ENCODE measurements at regions of chr10 and their contacts with region 1.

Region 1: GRCh38 chr10:62816331-62817120 is at the start of gene EGR2:
- DNase-seq: peak; percentile 98
- total RNA-seq, gene EGR2: 3.0 to 4.0 TPM

Region 2: GRCh38 chr10:62443866-62444265 is 372.7 kb before region 1 on chr10:
- intact Hi-C with region 1: loop called in 1 of 2 experiments (anchors 10 kb)
- DNase-seq: no peak

Region 3: GRCh38 chr10:62594093-62594520 is 222.4 kb before region 1 on chr10:
- intact Hi-C with region 1: loop called in 1 of 2 experiments (anchors 10 kb)
- DNase-seq: peak; percentile 86

Region 4: DNA sequence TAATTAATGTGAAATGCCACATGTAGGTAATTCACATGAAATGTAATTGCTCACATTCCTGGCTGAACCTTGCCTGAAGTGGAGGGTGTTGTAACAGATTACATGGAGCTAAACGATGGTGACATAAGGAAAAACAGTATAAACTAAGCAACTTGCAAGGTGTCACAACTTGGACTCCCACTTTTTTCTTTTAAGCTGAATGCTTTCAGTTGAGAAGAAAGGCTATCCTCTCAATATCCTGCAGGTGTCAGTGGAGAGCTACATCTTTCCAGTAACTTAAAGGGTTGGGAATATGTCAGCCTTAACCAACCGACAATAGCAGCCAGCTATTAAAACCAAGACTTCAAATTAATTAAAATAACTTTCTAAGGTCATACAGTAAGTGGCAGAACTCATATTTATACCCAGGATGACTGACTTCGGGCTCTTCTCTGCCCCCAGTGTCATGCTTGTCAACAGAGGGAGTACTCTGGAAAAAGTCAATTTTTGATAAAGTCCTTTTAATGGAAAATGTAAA is 350.3 kb after region 1 on chr10:
- intact Hi-C with region 1: loop called in 1 of 2 experiments (anchors 10 kb)
- DNase-seq: no peak